Psoas muscle (tissue), 8 donors: ENCODE measurements at regions of chr12 and their contacts with region 1.

Region 1: GRCh38 chr12:3202734-3203446 is 125.7 kb downstream of the TSPAN9 start:
- DNase-seq: peak; percentile 65 to 79
- ATAC-seq: peak; percentile 43 to 69 (median 60)
- H3K4me3 ChIP-seq: peak overlapping the region; percentile 71
- H3K27ac ChIP-seq: peak overlapping the region; percentile 3
- H3K4me1 ChIP-seq: peaks cover 58% of the 10 kb centered on the region
- H3K27me3 ChIP-seq: no peaks in the 10 kb centered on the region
- CTCF ChIP-seq: peak; percentile 90

Region 2: GRCh38 chr12:3135522-3136461 is 67.1 kb before region 1 on chr12:
- intact Hi-C with region 1: loop called (anchors 2 to 5 kb)
- DNase-seq: no peak
- ATAC-seq: peak; percentile 75 to 88 (median 84)
- H3K4me3 ChIP-seq: no peak overlapping the region
- H3K27ac ChIP-seq: no peak overlapping the region
- H3K4me1 ChIP-seq: peaks cover 20% of the 10 kb centered on the region
- H3K27me3 ChIP-seq: no peaks in the 10 kb centered on the region
- CTCF ChIP-seq: peak; percentile 89

Region 3: DNA sequence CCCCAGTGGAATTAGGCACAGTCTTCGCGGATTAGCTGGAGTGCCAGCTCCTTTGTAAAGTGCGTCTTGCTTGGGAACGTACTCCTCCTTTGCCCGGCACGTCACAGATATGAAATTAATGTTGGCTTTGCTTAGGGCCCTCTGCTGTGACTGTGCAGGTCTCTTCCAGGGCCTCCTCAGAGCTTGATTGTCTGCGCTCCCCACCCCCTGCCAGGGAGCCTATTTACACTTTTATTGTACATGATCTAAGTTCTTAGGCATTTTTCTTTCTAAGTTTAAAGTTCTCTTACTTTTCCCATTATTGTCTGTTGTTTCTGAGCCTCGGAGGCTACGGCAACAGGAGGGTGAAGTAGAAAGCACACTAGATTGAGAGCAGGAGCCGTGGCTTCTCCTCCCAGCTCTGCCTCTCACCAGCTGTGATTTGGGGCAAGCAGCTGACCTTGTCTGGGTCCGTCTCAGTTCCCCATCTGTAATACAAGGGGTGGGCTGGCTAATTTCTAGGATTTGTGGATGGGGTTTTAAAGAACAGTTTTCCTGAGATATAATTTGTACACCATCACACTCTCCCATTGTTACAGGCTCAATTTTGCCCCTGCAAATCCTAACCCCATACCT is 43.9 kb before region 1 on chr12:
- intact Hi-C with region 1: loop called in 1 of 2 experiments (anchors 5 kb)
- DNase-seq: peak in 1 of 2 donors; percentile 38
- ATAC-seq: no peak
- H3K4me3 ChIP-seq: no peak overlapping the region
- H3K27ac ChIP-seq: no peak overlapping the region
- H3K4me1 ChIP-seq: peaks cover 5% of the 10 kb centered on the region
- H3K27me3 ChIP-seq: no peaks in the 10 kb centered on the region
- CTCF ChIP-seq: no peak

Region 4: DNA sequence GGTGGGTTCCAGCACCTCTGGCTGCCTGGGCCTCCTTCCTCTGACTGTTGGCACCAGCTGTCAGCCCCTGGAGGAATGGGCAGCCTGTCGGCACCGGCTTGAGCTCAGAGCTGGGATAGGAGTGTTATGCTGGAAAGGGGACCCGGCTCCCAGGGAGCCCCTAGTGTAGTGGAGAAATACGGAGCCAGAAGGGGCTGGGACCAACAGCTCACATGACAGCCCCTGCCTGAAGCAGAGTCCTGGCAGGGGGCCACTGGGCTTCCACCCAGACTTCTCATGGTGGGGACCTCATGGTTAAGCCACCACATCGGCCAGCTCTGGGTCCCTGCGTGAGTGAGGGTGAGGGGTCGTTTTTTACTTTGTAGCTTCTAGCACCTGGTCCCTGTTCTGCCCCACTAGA is 48.8 kb after region 1 on chr12:
- intact Hi-C with region 1: loop called in 1 of 2 experiments (anchors 2 kb)
- DNase-seq: peak in 1 of 2 donors; percentile 56
- ATAC-seq: peak in 1 of 4 donors; percentile 2
- H3K4me3 ChIP-seq: no peak overlapping the region
- H3K27ac ChIP-seq: peak overlapping the region; percentile 96
- H3K4me1 ChIP-seq: peaks cover 94% of the 10 kb centered on the region
- H3K27me3 ChIP-seq: no peaks in the 10 kb centered on the region
- CTCF ChIP-seq: no peak

Region 5: DNA sequence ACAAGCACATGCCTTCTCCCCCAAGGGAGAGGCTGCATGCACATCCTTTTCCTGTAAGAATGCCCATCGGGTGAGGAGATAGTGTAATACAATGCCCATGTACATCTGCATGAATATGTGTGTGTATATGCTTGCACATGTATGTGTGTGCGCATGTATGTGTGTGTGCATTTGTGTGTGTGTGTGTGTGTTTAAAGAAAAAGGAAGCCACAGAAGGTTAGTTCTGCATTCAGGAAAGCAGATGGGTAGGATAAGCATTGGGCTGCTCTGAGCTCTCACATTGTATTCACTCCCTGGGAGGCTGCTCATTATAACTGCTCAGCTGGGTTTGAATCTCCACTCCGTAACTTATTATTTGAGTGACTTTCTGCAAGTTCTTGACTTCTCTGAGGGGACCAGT is 1591.6 kb after region 1 on chr12:
- intact Hi-C with region 1: loop called in 1 of 2 experiments (anchors 5 kb)
- DNase-seq: no peak
- ATAC-seq: no peak
- H3K4me3 ChIP-seq: no peak overlapping the region
- H3K27ac ChIP-seq: no peak overlapping the region
- H3K4me1 ChIP-seq: no peaks in the 10 kb centered on the region
- H3K27me3 ChIP-seq: peaks cover 0 to 13% (median 0%) of the 10 kb centered on the region in 3 donors
- CTCF ChIP-seq: no peak